Activated T-helper 1 cell treated with anti-CD3 and anti-CD28 coated beads, Interleukin-12 subunit alpha, Interleukin-12 subunit beta, Interleukin-2, Interleukin-4 antibody, amounts not matched to agents 30 ng/mL and 10 ng/mL and 1 ng/mL, durations not matched to agents 14 hours and 24 hours and 36 hours (primary cell): ENCODE measurements at regions of chr16 and their contacts with region 1.

Region 1: GRCh38 chr16:75110637-75111513 is 5.7 kb downstream of the LDHD start:
- DNase-seq: peak; percentile 77
- H3K4me3 Mint-ChIP-seq: peak overlapping the region; percentile 79
- H3K27ac Mint-ChIP-seq: peak overlapping the region; percentile 92
- H3K4me1 Mint-ChIP-seq: peaks cover 62% of the 10 kb centered on the region
- H3K27me3 Mint-ChIP-seq: no peaks in the 10 kb centered on the region

Region 2: GRCh38 chr16:74813109-74813641 is 297.7 kb before region 1 on chr16:
- intact Hi-C with region 1: loop called (anchors 1 kb)
- DNase-seq: peak; percentile 63
- H3K4me3 Mint-ChIP-seq: no peak overlapping the region
- H3K27ac Mint-ChIP-seq: no peak overlapping the region
- H3K4me1 Mint-ChIP-seq: no peaks in the 10 kb centered on the region
- H3K27me3 Mint-ChIP-seq: peaks cover 4% of the 10 kb centered on the region

Region 3: DNA sequence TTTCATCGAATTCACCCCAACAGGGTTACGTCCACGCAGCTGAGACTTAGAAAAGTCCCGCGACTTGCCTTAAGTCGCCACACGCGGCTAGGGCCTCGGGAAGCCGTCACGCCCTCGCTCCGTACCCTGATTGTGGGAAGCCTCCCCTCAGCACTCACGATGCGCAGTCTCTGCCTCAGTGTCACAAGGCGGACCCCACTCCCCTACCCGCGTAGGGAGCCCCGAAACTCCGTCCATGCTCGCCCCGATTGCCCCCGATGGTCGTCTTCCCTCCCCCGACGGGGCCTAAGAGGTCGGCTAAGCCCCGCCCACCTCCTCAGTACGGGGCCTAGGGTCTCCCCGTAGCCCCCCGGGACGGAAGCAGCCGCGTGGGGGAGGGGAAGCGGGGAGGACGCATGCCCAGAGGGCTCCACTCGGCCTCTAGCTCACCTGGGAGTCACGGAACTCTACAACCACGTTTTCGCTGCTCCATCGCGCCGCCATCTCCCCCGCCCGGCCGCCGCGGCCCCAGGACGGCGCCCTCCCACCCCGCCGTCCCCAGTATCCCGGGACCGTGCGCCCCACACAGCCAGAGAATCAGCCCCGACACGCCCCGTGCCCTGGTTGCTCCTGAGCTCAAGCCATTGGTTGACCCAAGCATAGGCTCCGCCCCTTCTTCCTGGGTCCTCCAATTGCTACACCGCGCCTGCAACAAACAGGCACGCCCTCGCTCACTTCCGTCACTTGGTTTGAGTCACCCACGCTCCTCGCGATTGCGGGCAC is 126.2 kb before region 1 on chr16 and contains the start of gene WDR59:
- intact Hi-C with region 1: loop called (anchors 1 kb)
- DNase-seq: peak; percentile 99
- H3K4me3 Mint-ChIP-seq: peak within 1 kb of the TSS; percentile 90
- H3K27ac Mint-ChIP-seq: peak within 1 kb of the TSS; percentile 90
- H3K4me1 Mint-ChIP-seq: peaks cover 14% of the 10 kb centered on the region
- H3K27me3 Mint-ChIP-seq: peaks cover 3% of the 10 kb centered on the region
- total RNA-seq, gene WDR59: 85.9 and 95.3 TPM in 2 replicates

Region 4: DNA sequence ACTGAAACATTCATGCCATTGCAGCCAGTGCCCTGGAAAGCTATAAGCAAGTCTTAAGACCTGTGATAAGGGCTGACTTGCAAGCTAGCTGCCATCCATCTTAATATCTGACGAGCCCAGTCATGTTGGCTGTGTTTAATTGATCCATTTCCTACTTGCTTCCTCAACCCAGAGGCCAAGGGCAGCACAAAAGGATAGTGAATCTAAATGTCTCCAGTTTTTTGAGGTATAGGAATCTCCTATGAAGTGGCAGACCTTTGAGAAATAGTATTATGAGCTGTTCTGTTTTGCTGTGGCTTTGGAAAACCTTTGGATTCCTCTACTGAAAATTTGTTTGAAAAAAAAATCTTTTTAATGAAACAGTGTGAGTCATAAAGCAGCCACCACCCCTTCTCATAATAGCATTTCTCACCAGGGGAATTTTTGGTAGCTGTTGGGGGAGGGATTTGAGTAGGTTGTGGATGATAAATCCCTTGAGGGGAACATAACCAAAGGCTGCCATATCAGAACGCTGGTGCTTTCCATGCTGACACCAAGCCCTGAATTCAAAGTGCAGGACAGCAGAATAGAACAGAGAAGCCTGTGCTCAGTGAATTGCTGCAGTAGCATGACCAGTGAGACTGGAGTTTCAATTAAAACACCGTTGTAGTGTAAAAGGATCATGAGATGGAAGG is 99.1 kb before region 1 on chr16:
- intact Hi-C with region 1: loop called (anchors 1 kb)
- DNase-seq: peak; percentile 53
- H3K4me3 Mint-ChIP-seq: peak overlapping the region; percentile 80
- H3K27ac Mint-ChIP-seq: peak overlapping the region; percentile 98
- H3K4me1 Mint-ChIP-seq: peaks cover 65% of the 10 kb centered on the region
- H3K27me3 Mint-ChIP-seq: no peaks in the 10 kb centered on the region

Region 5: GRCh38 chr16:75074920-75075687 is 35.8 kb before region 1 on chr16:
- intact Hi-C with region 1: loop called (anchors 1 kb)
- DNase-seq: peak; percentile 83
- H3K4me3 Mint-ChIP-seq: peak overlapping the region; percentile 74
- H3K27ac Mint-ChIP-seq: peak overlapping the region; percentile 92
- H3K4me1 Mint-ChIP-seq: peaks cover 78% of the 10 kb centered on the region
- H3K27me3 Mint-ChIP-seq: no peaks in the 10 kb centered on the region

Region 6: DNA sequence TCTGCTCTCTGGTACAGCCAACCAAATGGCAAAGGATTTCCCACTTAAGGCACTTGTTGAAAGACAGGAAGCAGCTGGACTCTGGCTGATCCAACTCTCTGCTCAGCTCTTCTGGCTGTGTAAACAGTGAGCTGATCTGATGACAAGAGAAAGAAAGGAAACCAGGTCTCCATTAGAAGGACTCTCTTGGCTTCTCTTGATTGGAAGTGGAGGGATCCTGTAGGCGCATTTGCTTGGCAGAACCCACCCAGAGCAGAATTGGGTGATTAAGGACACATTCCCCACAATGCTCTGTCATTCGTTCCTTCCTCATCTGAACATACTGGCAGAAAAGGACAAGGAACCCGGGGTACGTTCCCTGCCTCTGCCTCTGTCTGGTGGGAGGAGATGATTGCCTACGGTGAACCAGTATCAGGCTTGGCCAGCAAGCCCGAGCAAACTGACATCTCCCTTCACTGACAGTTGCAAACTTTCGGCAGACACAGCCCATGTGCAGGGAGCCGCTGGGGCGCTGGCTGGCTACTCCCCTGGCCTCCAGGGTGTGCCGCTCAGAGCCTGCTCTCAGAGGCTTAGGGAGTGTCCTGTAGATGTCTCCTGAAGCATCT is 23.4 kb before region 1 on chr16:
- intact Hi-C with region 1: no loop called
- DNase-seq: no peak
- H3K4me3 Mint-ChIP-seq: no peak overlapping the region
- H3K27ac Mint-ChIP-seq: no peak overlapping the region
- H3K4me1 Mint-ChIP-seq: peaks cover 73% of the 10 kb centered on the region
- H3K27me3 Mint-ChIP-seq: no peaks in the 10 kb centered on the region

Region 7: GRCh38 chr16:75148311-75149195 is 37.7 kb after region 1 on chr16 and contains the start of gene ZFP1:
- intact Hi-C with region 1: loop called (anchors 1 kb)
- DNase-seq: peak; percentile 90
- H3K4me3 Mint-ChIP-seq: peak within 1 kb of the TSS; percentile 90
- H3K27ac Mint-ChIP-seq: peak within 1 kb of the TSS; percentile 84
- H3K4me1 Mint-ChIP-seq: peaks cover 29% of the 10 kb centered on the region
- H3K27me3 Mint-ChIP-seq: no peaks in the 10 kb centered on the region
- total RNA-seq, gene ZFP1: 12.3 and 14.6 TPM in 2 replicates

Region 8: DNA sequence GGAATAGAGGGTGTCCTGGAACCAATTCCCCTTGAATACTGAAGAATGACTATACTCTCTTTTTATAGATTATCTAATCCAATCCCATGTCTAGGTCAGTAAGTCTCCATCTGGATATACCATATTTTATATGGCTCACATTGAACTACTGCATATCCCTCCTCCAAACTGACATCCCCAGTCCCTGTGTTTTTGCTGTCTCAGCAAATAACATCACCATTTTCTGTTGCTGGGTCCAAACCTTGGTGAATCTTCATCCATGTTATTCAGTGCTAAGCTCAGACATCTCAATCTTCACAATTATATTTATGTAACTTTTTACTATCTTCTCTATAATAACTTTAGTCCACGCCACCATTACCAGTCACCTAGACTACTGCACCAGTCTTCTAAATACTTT is 896.8 kb after region 1 on chr16:
- intact Hi-C with region 1: no loop called
- DNase-seq: no peak
- H3K4me3 Mint-ChIP-seq: no peak overlapping the region
- H3K27ac Mint-ChIP-seq: no peak overlapping the region
- H3K4me1 Mint-ChIP-seq: no peaks in the 10 kb centered on the region
- H3K27me3 Mint-ChIP-seq: no peaks in the 10 kb centered on the region